A549 (cell line): ENCODE measurements at regions of chr1 and their contacts with region 1.

Region 1: GRCh38 chr1:40774266-40774998 is 9.2 kb upstream of the KCNQ4 start:
- DNase-seq: peak; percentile 18 to 48
- ATAC-seq: peak; percentile 74 to 87; a peak in 5 of 6 replicates
- H3K4me3 ChIP-seq: no peak overlapping the region
- H3K27ac ChIP-seq: no peak overlapping the region
- H3K4me1 ChIP-seq: no peaks in the 10 kb centered on the region
- CTCF ChIP-seq: peak; percentile 60
- EP300 ChIP-seq: no peak
- POLR2A ChIP-seq: no peak
- RAD21 ChIP-seq: peak; percentile 35 to 39; a peak in 3 of 5 replicates

Region 2: GRCh38 chr1:40763742-40764532 is 10.5 kb before region 1 on chr1:
- CTCF ChIA-PET with region 1: interaction called, 20 read pairs
- POLR2A ChIA-PET with region 1: no interaction called
- DNase-seq: no peak
- ATAC-seq: no peak
- H3K4me3 ChIP-seq: no peak overlapping the region
- H3K27ac ChIP-seq: no peak overlapping the region
- H3K4me1 ChIP-seq: no peaks in the 10 kb centered on the region
- CTCF ChIP-seq: no peak
- EP300 ChIP-seq: no peak
- POLR2A ChIP-seq: no peak
- RAD21 ChIP-seq: no peak

Region 3: GRCh38 chr1:40789675-40790430 is 15.4 kb after region 1 on chr1:
- CTCF ChIA-PET with region 1: interaction called, 11 read pairs
- POLR2A ChIA-PET with region 1: no interaction called
- DNase-seq: no peak
- ATAC-seq: no peak
- H3K4me3 ChIP-seq: no peak overlapping the region
- H3K27ac ChIP-seq: no peak overlapping the region
- H3K4me1 ChIP-seq: no peaks in the 10 kb centered on the region
- CTCF ChIP-seq: no peak
- EP300 ChIP-seq: no peak
- POLR2A ChIP-seq: no peak
- RAD21 ChIP-seq: no peak

Region 4: DNA sequence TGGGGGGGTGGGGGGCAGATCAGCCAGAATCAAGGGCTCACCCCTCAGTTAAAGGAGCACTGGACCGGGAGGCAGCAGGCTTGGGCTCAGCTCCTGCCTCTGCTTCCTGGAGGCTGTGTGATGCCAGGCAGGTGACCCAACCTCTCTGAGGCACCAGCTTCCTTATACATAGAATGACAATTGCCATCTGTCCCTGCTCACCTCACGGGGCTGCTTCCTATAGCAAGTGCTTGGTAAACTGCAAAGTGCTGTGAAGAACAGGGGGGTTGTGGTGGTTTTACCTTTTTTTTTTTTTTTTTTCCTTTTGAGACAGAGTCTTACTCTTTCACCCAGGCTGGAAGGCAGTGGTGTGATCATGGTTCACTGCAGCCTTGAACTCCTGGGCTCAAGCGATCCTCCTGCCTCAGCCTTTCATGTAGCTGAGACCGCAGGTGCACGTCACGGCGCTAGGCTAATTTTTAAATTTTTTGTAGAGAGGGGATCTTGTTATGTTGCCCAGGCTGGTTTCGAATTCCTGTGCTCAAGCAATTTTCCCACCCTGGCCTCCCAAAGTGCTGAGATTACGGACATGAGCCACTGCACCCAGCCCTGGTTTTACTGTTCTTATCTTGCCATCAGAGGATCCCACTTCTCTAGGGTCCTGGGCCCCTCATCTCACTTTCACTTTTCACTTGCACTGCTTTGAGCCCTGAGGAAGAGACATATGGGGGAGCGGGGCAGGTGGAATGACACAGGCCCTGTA is 20.7 kb after region 1 on chr1:
- CTCF ChIA-PET with region 1: interaction called, 11 read pairs
- POLR2A ChIA-PET with region 1: no interaction called
- DNase-seq: no peak
- ATAC-seq: no peak
- H3K4me3 ChIP-seq: no peak overlapping the region
- H3K27ac ChIP-seq: no peak overlapping the region
- H3K4me1 ChIP-seq: 0 out of 3 replicates have a peak, but pooled peaks cover 3% of the 10 kb centered on the region
- CTCF ChIP-seq: no peak
- EP300 ChIP-seq: no peak
- POLR2A ChIP-seq: no peak
- RAD21 ChIP-seq: no peak